Activated naive CD4-positive, alpha-beta T cell treated with anti-CD3 and anti-CD28 coated beads for 36 hours (primary cell): ENCODE measurements at regions of chr14 and their contacts with region 1.

Region 1: GRCh38 chr14:33792720-33793368 is 158.0 kb downstream of the EGLN3 start:
- DNase-seq: peak; percentile 80
- H3K4me3 Mint-ChIP-seq: no peak overlapping the region
- H3K27ac Mint-ChIP-seq: no peak overlapping the region
- H3K4me1 Mint-ChIP-seq: peaks cover 8% of the 10 kb centered on the region
- H3K27me3 Mint-ChIP-seq: peaks cover 20% of the 10 kb centered on the region

Region 2: GRCh38 chr14:32588448-32589320 is 1204.2 kb before region 1 on chr14:
- CTCF ChIA-PET with region 1: interaction called, 11 read pairs
- intact Hi-C with region 1: no loop called
- DNase-seq: peak; percentile 15
- H3K4me3 Mint-ChIP-seq: no peak overlapping the region
- H3K27ac Mint-ChIP-seq: no peak overlapping the region
- H3K4me1 Mint-ChIP-seq: no peaks in the 10 kb centered on the region
- H3K27me3 Mint-ChIP-seq: no peaks in the 10 kb centered on the region

Region 3: DNA sequence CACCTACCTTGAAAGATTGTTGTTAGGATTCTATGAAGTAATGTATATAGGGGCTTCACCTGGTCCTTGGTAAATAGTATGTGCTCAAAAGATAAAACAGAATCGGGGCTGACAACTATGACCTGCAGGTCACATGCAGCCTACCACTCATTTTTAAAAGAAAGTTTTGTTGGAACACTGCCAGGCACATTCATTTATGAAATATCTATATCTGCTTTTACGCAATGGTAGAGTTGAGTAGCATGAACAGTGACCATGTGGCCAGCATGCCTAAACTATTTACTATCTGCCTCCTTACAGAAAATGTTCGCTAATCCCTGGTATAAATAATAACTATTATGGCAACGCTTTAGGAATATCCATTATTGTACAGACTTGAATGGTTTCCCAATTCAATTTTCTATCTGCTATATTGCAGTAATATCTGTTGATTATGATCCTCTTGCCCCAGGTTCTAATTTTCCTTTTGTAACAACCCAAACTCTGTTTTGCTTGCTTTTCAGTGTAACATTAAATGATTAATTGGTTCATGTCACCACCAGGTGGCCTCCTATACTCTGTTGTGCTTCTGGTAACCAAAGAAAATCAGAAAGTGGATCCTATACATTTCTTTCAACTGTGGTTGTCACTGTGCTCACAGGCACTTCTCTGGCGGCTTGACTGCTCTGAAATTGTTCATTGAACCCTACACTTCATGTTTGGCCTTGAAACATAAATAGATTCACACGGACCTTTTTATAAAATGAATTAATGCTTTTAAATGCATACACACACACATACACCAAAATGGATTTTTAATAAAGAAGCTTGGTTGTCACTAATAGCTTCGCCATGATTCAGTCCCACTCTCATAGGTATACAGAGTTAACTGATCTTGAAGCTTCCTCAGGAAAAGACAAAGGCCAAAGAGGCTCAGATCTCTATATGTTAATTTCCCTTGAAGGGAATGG is 1081.8 kb before region 1 on chr14:
- CTCF ChIA-PET with region 1: interaction called, 7 read pairs
- intact Hi-C with region 1: loop called (anchors 1 kb)
- DNase-seq: peak; percentile 32
- H3K4me3 Mint-ChIP-seq: no peak overlapping the region
- H3K27ac Mint-ChIP-seq: no peak overlapping the region
- H3K4me1 Mint-ChIP-seq: peaks cover 2% of the 10 kb centered on the region
- H3K27me3 Mint-ChIP-seq: no peaks in the 10 kb centered on the region

Region 4: DNA sequence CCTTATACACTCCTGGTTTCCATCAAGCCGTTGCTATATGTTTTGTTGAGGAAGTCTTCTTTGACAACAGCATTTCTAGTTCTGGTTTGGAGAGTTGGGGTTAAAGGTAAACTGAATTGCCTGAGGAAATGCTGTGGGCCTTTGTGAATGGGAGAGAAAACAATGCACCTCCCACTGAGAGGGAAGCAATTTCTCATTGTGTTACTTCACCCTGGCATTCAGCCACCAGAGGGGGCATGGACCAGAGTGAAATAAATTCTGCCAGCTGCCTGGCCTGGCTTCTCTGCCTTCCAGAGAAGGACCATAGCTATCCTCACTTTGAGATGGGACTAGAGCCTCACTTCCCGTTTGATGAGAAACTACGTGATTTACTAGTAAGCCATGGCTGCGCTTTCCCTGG is 317.2 kb before region 1 on chr14:
- CTCF ChIA-PET with region 1: interaction called, 7 read pairs
- intact Hi-C with region 1: loop called (anchors 1 kb)
- DNase-seq: peak; percentile 24
- H3K4me3 Mint-ChIP-seq: no peak overlapping the region
- H3K27ac Mint-ChIP-seq: no peak overlapping the region
- H3K4me1 Mint-ChIP-seq: no peaks in the 10 kb centered on the region
- H3K27me3 Mint-ChIP-seq: peaks cover 2% of the 10 kb centered on the region

Region 5: GRCh38 chr14:33602396-33602795 is 190.4 kb before region 1 on chr14:
- CTCF ChIA-PET with region 1: no interaction called
- intact Hi-C with region 1: no loop called
- DNase-seq: no peak
- H3K4me3 Mint-ChIP-seq: no peak overlapping the region
- H3K27ac Mint-ChIP-seq: no peak overlapping the region
- H3K4me1 Mint-ChIP-seq: no peaks in the 10 kb centered on the region
- H3K27me3 Mint-ChIP-seq: peaks cover 2% of the 10 kb centered on the region

Region 6: DNA sequence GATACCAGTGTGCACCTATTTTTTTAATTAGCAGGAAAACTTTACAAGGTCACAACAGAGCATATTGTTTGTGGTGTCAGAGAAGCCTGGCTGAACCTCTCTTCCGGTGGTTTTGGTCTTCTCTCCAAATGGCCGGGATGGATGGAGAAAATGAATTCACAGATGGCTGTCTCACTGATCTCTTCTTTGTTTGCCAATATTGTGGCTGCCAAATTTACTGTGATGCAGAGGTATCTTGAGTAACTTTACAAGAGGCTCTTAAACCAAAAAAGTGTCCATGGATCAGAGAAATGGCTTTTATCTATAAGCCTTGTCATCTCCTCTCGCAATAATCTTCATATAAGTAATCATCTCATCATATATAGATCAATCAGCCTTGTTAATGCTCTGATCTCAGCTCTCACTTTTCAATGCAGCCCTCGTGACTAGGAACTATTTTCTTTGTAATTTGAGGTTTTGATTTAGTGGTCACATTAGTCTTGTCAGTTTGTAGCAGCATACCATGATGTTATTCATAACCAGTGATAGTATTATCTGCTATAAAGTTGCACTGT is 150.1 kb before region 1 on chr14:
- CTCF ChIA-PET with region 1: no interaction called
- intact Hi-C with region 1: no loop called
- DNase-seq: no peak
- H3K4me3 Mint-ChIP-seq: no peak overlapping the region
- H3K27ac Mint-ChIP-seq: no peak overlapping the region
- H3K4me1 Mint-ChIP-seq: no peaks in the 10 kb centered on the region
- H3K27me3 Mint-ChIP-seq: no peaks in the 10 kb centered on the region

Region 7: DNA sequence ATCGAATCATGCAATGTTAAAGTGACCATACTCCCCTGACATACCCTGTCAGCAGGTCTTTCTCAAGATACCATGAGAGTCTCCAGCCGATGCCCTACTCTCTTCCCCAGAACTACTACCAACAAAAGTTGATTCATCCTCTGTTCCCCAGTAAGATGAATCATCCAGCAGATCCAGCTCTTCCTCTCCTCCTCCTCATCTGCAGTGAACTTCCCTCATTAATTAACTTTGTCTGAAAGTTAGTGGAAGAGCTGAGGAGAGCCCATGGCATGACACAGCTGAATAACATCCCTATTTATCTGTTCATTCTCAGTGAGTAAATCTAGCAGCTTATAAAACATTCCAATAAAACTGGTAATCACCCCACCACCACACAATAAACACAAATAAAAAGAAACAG is 55.4 kb before region 1 on chr14:
- CTCF ChIA-PET with region 1: no interaction called
- intact Hi-C with region 1: no loop called
- DNase-seq: no peak
- H3K4me3 Mint-ChIP-seq: no peak overlapping the region
- H3K27ac Mint-ChIP-seq: no peak overlapping the region
- H3K4me1 Mint-ChIP-seq: peaks cover 8% of the 10 kb centered on the region
- H3K27me3 Mint-ChIP-seq: no peaks in the 10 kb centered on the region

Region 8: DNA sequence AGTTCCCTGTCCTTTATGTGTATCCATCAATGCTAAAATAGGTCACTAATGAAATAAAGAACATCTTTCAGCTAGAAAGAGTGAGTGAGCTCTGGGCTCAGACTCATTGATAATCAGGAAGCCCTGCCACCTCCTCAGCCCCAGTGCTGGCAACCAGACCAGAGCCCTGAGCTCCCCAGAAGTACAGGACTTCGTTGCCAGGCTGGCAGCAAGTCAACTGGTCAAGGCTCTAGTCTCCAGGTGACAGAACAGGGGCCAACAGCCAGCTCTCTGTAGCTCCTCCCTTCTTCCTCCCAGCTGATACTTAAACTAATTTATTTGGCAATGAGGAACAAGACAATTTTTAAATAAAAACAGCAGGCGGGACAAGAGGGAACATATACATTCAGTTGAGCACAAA is 12.7 kb after region 1 on chr14:
- CTCF ChIA-PET with region 1: interaction called, 13 read pairs
- intact Hi-C with region 1: no loop called
- DNase-seq: no peak
- H3K4me3 Mint-ChIP-seq: no peak overlapping the region
- H3K27ac Mint-ChIP-seq: no peak overlapping the region
- H3K4me1 Mint-ChIP-seq: peaks cover 2% of the 10 kb centered on the region
- H3K27me3 Mint-ChIP-seq: peaks cover 20% of the 10 kb centered on the region

Region 9: GRCh38 chr14:34128665-34129064 is 335.8 kb after region 1 on chr14:
- CTCF ChIA-PET with region 1: no interaction called
- intact Hi-C with region 1: no loop called
- DNase-seq: no peak
- H3K4me3 Mint-ChIP-seq: no peak overlapping the region
- H3K27ac Mint-ChIP-seq: no peak overlapping the region
- H3K4me1 Mint-ChIP-seq: no peaks in the 10 kb centered on the region
- H3K27me3 Mint-ChIP-seq: no peaks in the 10 kb centered on the region

Region 10: GRCh38 chr14:34300882-34301734 is 508.3 kb after region 1 on chr14:
- CTCF ChIA-PET with region 1: interaction called, 3 read pairs
- intact Hi-C with region 1: loop called (anchors 2 kb)
- DNase-seq: peak; percentile 13
- H3K4me3 Mint-ChIP-seq: no peak overlapping the region
- H3K27ac Mint-ChIP-seq: no peak overlapping the region
- H3K4me1 Mint-ChIP-seq: no peaks in the 10 kb centered on the region
- H3K27me3 Mint-ChIP-seq: no peaks in the 10 kb centered on the region